ENCODE measurements at regions of chr6 and their contacts with region 1.

Region 1: DNA sequence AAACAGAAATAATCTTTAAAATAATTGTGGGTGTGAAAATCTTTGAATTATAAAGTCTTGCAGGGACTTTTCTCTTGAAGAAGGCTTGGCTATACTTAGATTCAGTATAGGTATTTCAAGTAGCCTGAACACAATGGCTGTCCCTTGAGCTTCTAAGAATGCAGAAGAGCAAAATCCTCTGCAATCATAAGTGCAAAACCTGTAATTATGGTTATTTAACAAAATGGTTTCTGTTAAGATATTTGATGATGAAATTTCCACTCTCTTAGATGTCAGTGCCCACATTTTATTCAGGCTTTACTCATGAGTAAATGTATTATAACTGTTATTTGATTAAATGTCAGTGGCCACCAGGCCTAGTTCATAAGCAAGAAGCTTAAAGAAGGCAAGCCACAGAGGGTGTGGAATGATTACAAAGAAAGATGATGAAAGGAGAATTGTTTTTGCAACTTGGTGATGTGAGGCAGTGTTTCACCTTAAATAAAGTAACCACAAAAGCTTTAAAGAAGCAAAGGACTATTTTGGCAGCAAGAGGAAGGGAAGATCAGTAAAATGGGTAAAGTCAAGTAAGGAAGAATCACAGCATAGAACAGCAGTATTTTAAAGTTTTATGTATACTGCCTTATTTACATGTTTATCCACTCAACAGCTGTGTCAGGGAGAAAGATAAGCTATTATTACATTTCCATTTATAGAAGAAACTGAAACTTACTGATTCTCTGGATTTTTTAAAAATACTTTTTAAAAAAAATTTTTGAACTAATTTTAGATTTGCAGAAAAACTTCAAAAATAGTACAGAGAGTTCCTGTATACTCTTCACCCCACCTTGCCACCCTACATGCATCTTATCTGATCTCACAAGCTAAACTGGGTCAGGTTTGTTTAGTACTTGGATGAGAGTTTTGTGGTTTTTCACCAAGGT is 351.1 kb upstream of the RUNX2 start:
- DNase-seq: peak; percentile 75
- H3K4me3 Mint-ChIP-seq: peak overlapping the region; percentile 8
- H3K27ac Mint-ChIP-seq: peak overlapping the region; percentile 71
- H3K4me1 Mint-ChIP-seq: peaks cover 19% of the 10 kb centered on the region
- H3K27me3 Mint-ChIP-seq: no peaks in the 10 kb centered on the region

Region 2: DNA sequence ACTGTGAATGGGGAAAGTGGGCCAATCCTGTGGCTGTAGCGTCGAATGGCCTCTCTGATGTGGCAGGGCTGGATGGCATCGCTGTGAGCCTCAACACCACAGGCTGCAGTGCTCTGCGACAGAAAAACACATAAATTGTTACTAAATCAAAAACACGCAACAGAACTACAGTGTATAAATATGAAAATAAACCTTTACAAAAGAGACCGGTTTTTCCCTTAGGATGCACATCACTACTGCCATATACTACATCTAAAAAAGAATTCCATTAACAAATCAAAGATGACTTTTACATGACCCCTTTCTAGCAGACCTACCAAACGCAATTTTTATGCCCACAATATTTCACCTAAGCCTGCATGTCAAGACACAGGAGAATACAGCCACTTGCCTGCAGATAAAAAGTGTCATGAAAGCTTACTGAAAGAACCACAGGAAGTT is 44.3 kb before region 1 on chr6:
- intact Hi-C with region 1: loop called (anchors 5 kb)
- DNase-seq: peak; percentile 80
- H3K4me3 Mint-ChIP-seq: peak overlapping the region; percentile 89
- H3K27ac Mint-ChIP-seq: peak overlapping the region; percentile 96
- H3K4me1 Mint-ChIP-seq: peaks cover 42% of the 10 kb centered on the region
- H3K27me3 Mint-ChIP-seq: no peaks in the 10 kb centered on the region

Region 3: GRCh38 chr6:44966449-44967092 is 10.4 kb before region 1 on chr6:
- intact Hi-C with region 1: no loop called
- DNase-seq: no peak
- H3K4me3 Mint-ChIP-seq: no peak overlapping the region
- H3K27ac Mint-ChIP-seq: no peak overlapping the region
- H3K4me1 Mint-ChIP-seq: peaks cover 13% of the 10 kb centered on the region
- H3K27me3 Mint-ChIP-seq: no peaks in the 10 kb centered on the region

Region 4: GRCh38 chr6:45001663-45002062 is 24.7 kb after region 1 on chr6:
- intact Hi-C with region 1: loop called (anchors 1 kb)
- DNase-seq: peak; percentile 78
- H3K4me3 Mint-ChIP-seq: peak overlapping the region; percentile 39
- H3K27ac Mint-ChIP-seq: peak overlapping the region; percentile 84
- H3K4me1 Mint-ChIP-seq: peaks cover 29% of the 10 kb centered on the region
- H3K27me3 Mint-ChIP-seq: no peaks in the 10 kb centered on the region

Region 5: DNA sequence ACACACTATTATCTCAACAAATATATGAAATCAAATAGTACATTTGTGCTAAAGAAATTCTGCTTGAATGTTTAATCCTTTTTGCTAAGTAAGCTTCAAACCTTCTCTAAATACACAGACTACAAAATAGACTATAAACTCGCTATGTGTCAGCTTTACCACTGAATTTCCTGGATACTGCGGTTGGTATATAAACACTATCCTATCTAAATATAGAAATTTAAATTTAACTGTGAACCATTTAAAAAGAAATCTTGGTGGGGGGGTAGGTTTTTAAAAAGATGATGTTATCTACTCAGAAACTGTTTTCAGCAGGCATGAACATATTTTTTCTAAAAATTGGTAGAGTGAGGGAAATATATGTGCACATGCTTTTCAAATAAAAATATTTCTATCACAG is 44.7 kb after region 1 on chr6:
- intact Hi-C with region 1: loop called (anchors 5 kb)
- DNase-seq: peak; percentile 64
- H3K4me3 Mint-ChIP-seq: no peak overlapping the region
- H3K27ac Mint-ChIP-seq: no peak overlapping the region
- H3K4me1 Mint-ChIP-seq: peaks cover 14% of the 10 kb centered on the region
- H3K27me3 Mint-ChIP-seq: no peaks in the 10 kb centered on the region

Region 6: DNA sequence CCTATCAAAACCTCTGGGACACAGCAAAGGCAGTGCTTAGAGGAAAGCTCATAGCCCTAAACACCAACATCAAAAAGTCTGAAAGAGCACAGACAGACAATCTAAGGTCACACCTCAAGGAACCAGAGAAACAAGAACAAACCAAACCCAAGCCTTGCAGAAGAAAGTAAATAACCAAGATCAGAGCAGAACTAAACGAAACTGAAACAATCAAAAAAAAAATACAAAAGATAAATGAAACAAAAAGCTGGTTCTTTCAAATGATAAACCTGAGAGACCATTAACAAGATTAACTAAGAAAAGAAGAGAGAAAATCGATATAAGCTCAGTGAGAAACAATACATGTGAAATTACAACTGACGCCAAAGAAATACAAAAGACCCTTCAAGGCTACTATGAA is 316.3 kb after region 1 on chr6:
- intact Hi-C with region 1: loop called (anchors 5 kb)
- DNase-seq: peak; percentile 75
- H3K4me3 Mint-ChIP-seq: peak overlapping the region; percentile 63
- H3K27ac Mint-ChIP-seq: peak overlapping the region; percentile 64
- H3K4me1 Mint-ChIP-seq: peaks cover 30% of the 10 kb centered on the region
- H3K27me3 Mint-ChIP-seq: no peaks in the 10 kb centered on the region

Region 7: GRCh38 chr6:45483021-45483420 is 506.0 kb after region 1 on chr6:
- intact Hi-C with region 1: no loop called
- DNase-seq: no peak
- H3K4me3 Mint-ChIP-seq: no peak overlapping the region
- H3K27ac Mint-ChIP-seq: no peak overlapping the region
- H3K4me1 Mint-ChIP-seq: peaks cover 35% of the 10 kb centered on the region
- H3K27me3 Mint-ChIP-seq: no peaks in the 10 kb centered on the region

Measured in activated CD4-positive, alpha-beta T cell treated with anti-CD3 and anti-CD28 coated beads, Interleukin-2, amount 10 ng/mL, durations not matched to agents 24 days and 14 days (primary cell).